Right ventricle myocardium superior (tissue), 1 donor: ENCODE measurements at regions of chr12 and their contacts with region 1.

Region 1: GRCh38 chr12:48286665-48287064 is 64.1 kb downstream of the ZNF641 start:
- DNase-seq: no peak
- ATAC-seq: no peak

Region 2: GRCh38 chr12:48092611-48093010 is 194.1 kb before region 1 on chr12:
- intact Hi-C with region 1: no loop called
- DNase-seq: no peak
- ATAC-seq: no peak

Region 3: GRCh38 chr12:48165094-48165981 is 121.3 kb before region 1 on chr12:
- intact Hi-C with region 1: no loop called
- DNase-seq: no peak
- ATAC-seq: peak; percentile 80

Region 4: GRCh38 chr12:48454667-48455066 is 168.0 kb after region 1 on chr12:
- intact Hi-C with region 1: loop called (anchors 10 kb)
- DNase-seq: no peak
- ATAC-seq: no peak